Colonic mucosa (tissue), 4 donors: ENCODE measurements at regions of chr7 and their contacts with region 1.

Region 1: GRCh38 chr7:76997381-76997780 is 34.8 kb downstream of the SPDYE17 start:
- DNase-seq: no peak
- H3K4me3 ChIP-seq: no peak overlapping the region
- H3K27ac ChIP-seq: no peak overlapping the region
- H3K4me1 ChIP-seq: no peaks in the 10 kb centered on the region
- H3K27me3 ChIP-seq: no peaks in the 10 kb centered on the region
- CTCF ChIP-seq: no peak

Region 2: DNA sequence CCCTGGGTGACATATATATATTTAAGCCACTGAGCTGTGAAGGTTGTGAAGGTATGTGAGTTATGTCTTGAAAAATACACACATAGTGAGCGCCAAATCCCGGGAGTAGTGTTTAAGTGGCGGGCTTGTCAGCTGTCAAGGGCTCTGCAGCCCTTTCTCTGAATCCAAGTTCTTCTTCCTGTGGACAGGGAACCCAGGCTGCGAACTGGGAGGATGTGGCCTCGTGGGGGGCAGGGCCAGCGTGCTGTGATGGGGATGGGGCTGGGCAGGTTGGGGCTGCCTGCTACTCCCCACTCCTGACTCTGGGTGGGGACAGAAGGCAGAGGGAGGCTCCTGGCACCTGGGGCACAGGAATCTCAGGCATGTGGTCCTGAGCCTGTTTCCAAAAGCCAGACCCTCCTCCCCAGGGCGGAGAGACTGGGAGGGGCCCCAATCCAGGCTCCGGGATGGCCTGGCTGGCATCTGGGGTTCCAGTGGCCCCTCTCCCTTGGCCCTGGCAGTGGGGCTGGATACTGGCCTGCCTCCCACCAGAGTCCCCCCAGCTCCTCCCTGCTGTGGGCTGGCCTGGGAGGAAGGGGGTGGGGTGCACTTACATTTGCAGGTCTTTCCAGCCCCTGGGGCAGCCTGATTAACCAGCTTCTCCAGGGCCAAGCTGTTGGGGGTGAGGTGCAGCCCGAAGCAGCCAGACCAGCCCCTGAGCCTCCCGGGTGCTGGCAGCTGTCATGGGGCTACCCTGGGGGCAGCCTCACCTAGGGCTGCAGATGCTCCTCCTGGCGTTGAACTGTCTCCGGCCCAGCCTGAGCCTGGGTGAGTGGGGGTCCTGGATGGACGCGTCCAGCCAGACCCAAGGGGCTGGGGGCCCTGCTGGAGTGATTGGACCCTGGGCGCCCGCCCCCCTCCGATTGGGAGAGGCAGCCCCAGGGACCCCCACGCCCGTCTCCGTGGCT is 487.2 kb before region 1 on chr7 and contains the start of gene UPK3B:
- intact Hi-C with region 1: loop called (anchors 10 kb)
- DNase-seq: no peak
- H3K4me3 ChIP-seq: no peak within 1 kb of the TSS
- H3K27ac ChIP-seq: no peak within 1 kb of the TSS
- H3K4me1 ChIP-seq: peaks cover 6% of the 10 kb centered on the region
- H3K27me3 ChIP-seq: no peaks in the 10 kb centered on the region
- CTCF ChIP-seq: no peak
- total RNA-seq, gene UPK3B: 0.72 to 2.6 TPM

Region 3: DNA sequence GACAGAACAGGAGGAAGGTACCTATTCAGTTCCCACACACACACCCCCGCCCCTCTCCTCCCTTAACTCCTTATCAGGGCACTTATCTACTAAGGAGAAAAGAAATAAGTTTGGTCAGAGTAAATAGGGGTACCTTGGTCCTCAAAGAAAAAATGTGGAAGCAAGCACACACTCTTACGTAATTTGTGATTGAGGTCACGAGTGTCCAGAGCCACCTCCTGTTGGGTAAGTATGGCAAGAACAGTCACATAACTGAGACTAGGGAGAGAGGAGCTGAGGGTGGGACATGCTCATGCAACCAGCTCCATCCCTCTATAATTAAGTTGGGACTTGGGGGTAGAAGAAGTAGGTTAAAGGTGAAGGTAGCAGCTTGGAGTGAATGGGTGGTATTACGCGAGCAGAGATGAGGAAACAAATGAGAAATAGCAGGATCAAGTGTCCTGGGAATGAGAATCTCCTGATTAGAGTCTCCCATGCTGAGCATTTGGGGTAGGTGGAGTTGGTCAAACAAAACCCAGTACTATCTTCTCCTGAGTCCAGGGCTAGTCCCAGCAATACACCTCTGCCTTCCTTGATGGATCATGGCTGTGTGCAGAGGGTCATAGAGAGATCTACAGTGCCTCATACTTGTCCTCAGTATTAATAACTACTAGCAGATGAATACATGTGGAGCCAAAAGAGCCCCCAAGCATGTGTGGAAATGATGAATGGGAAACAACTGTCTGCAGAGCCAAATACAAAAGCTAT is 341.7 kb after region 1 on chr7:
- intact Hi-C with region 1: no loop called
- DNase-seq: no peak
- H3K4me3 ChIP-seq: no peak overlapping the region
- H3K27ac ChIP-seq: peak overlapping the region; percentile 18
- H3K4me1 ChIP-seq: peaks cover 13% of the 10 kb centered on the region
- H3K27me3 ChIP-seq: no peaks in the 10 kb centered on the region
- CTCF ChIP-seq: no peak